ENCODE measurements at regions of chr19 and their contacts with region 1.

Region 1: DNA sequence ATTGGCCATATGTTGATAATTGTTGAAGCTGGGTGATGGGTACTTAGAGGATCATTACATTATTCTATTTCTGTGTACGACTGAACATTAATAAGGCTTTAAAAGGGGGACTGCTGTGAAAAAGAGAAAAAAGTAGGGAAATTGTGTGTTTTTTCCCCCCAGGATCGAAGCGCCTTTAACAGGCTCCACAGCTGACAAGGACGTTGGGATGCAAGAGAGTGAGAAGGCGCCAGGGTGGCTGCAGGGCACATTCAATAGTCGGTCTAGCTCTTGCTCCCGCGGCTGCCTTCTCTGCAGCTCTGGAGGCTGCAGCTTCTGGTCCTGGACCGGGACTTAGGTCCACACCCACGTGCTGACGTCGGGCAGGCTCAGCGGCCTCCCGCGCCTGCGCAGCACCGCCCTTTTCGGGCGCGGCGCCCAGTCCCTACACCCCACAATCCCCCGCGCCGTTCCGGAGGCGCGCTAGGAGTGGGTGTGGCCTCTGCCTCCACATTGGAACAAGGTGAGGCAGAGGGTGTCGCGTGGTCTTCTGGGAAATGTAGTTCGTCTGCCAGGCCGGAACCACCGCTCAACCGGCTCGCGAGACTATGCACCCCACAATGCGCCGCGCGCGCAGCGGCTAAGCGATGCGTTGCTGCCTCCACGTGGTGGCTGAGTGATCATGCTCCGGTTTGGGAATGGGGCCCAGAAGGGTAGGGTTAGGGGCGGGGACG is 4.9 kb upstream of the LRFN3 start:
- DNase-seq: peak; percentile 98 to 100 (median 98)

Region 2: DNA sequence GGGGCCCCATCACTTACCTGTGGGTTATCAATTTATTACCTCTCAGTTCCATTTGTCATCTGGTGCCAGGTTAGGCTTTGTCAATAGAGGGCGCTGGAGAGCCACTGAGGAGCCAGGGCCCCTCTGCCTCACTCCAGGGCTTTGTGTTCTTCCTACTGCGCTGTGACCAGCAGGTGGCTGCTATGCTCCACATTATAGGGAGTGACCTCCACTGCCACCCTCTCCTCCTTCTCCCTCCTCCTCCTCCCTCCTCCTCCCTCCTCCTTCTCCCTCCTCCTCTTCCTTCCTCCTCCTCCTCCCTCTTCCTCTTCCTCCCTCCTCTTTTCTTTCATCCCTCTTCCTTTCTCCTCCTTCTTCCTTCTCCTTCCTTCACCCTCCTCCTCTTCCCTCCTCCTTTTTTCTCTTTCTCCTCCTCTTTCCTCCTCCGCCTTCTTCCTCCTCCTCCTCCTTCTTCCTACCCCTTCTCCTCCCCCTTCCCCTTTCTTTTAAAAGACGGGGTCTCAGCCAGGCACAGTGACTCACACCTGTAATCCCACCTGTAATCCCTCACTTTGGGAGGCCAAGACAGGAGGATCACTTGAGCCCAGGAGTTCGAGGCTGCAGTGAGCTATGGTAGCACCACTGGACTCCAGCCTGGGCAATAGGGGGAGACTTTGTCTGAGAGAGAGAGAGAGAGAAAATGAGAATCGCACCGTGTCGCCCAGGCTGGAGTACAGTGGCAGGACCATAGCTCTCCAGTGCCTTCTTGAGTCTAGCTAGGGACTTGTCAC is 237.3 kb before region 1 on chr19:
- intact Hi-C with region 1: loop called (anchors 5 kb)
- DNase-seq: peak; percentile 66 to 98 (median 84)

Region 3: GRCh38 chr19:35740423-35741202 is 190.7 kb before region 1 on chr19:
- intact Hi-C with region 1: loop called (anchors 1 kb)
- DNase-seq: peak; percentile 97 to 100 (median 99)

Region 4: GRCh38 chr19:35775298-35776110 is 155.8 kb before region 1 on chr19 and contains the start of gene ARHGAP33:
- intact Hi-C with region 1: loop called (anchors 10 kb)
- DNase-seq: peak; percentile 98 to 100 (median 100)

Region 5: GRCh38 chr19:35882114-35882832 is 49.0 kb before region 1 on chr19:
- intact Hi-C with region 1: loop called (anchors 1 kb)
- DNase-seq: no peak

Region 6: DNA sequence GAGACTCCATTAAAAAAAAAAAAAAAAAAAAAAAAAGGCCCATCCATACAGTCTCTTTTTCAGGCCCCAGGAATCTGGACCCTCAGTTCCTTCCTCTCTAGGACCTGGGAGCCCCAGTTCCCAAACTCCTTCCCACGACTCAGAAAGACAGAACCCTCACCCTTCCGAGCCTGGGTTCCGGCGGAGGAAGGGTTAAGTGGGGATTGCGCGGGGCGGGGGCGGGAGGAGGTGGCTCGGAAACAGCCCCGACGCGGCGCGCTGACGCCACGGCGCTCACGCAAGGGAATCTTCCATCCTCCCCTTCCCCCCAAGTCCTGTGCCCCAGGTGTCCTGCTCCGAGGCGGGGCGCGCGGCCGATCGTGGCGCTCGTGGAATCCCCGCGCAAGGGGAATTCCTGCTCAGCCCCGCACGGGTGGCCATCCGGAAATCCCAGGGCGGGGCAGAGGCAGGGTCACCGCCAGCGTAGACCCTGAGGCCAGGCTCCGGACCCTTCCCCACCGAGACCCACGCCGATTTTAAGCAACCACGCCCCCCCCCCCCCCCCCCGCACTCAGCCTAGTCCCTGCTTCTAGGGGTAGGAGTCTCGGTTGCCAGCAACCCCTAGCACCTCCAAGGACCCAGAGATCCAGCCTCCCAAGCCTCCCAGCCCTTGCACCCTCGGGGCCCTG is 31.6 kb before region 1 on chr19:
- intact Hi-C with region 1: loop called (anchors 5 kb)
- DNase-seq: peak; percentile 57 to 97 (median 81)

Region 7: DNA sequence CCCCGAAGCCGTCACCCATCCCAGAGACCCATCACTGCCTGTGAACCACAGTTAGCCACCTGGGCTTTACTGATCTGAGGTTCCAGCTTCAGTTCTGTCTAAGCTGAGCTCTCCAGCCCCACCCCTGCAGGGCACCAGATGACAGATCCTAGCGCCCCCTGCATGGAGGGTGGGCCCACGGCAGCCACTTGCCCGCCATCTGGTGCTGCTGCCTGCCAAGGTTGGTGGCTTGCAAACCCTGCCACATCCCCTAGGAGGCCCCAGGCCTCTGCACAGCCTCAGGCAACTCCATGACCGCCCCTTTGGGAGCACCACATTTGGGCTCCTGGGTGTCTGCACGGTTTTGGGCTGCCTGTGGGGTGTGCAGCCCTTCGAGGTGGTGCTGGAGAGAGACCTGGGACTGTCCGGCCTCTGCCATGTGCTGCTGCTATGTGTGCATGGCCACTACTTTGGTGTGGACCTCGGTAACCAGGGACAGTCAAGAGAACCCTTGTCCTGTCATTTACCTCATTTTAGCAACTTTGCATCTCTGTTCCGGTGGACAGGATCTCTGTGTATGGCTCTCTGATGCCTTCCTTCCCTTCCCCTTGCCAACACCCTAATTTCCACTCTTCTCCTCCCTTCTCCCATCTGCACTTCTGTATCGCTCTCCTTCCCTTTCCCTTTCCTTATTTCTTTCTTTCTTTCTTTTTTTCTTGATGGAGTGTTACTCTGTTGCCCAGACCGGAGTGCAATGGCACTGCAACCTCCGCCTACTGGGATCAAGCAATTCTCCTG is 46.3 kb after region 1 on chr19:
- intact Hi-C with region 1: no loop called
- DNase-seq: no peak

Measured in posterior cingulate gyrus (tissue), 11 donors.